ENCODE measurements at regions of chr1 and their contacts with region 1.

Region 1: DNA sequence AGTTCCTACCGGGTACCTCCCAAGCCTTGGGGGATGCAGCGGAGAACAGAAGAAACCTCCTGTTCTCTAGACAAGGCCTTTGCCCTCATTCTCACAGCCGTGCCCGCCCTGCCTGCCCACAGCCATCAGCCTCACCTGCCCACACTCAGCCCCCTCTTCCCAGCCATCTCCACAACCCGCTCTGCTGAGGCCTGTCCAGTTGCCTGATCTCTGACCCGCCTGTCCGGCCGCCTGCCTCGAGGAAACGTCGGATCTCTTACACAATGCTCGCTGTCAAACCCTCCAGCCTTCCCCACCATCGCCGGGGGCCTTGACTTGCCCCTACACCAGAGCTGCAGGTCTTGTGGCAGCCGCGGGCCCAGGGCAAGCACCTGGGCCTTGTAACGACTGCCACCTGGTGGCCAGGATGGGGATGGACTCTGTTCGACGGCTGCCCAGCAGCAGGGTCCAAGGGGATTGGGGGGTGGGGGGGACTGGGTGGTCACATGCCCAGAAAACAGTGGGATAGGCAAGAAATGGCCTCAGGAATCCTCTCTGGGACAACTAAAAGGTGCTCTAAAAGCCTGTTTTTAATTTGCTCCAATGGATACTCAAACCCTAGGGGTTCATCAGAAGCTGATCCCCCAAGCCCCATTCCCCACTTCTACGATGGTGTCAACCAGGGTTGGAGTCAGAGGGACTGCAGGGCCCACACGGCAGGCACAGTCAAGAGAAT is 31.0 kb downstream of the SLC45A1 start:
- DNase-seq: peak; percentile 48
- ATAC-seq: peak; percentile 60
- H3K4me3 ChIP-seq: peak overlapping the region in 1 of 3 experiments; percentile 50; a peak in 1 of 6 replicates
- H3K27ac ChIP-seq: no peak overlapping the region
- H3K4me1 ChIP-seq: peaks cover 32% of the 10 kb centered on the region
- H3K27me3 ChIP-seq: peaks cover 0 to 20% of the 10 kb centered on the region in 2 experiments; a peak in 4 of 5 replicates
- CTCF ChIP-seq: peak; percentile 92
- EP300 ChIP-seq: no peak
- POLR2A ChIP-seq: no peak
- RAD21 ChIP-seq: peak; percentile 87

Region 2: GRCh38 chr1:7983086-7983778 is 365.7 kb before region 1 on chr1:
- CTCF ChIA-PET with region 1: interaction called, 18 read pairs
- POLR2A ChIA-PET with region 1: no interaction called
- in situ Hi-C with region 1: loop called (anchors 5 kb)
- intact Hi-C with region 1: loop called (anchors 1 kb)
- DNase-seq: no peak
- ATAC-seq: no peak
- H3K4me3 ChIP-seq: no peak overlapping the region
- H3K27ac ChIP-seq: no peak overlapping the region
- H3K4me1 ChIP-seq: 0 out of 2 replicates have a peak, but pooled peaks cover 5% of the 10 kb centered on the region
- H3K27me3 ChIP-seq: no peaks in the 10 kb centered on the region; a peak in 1 of 5 replicates
- CTCF ChIP-seq: no peak
- EP300 ChIP-seq: no peak
- POLR2A ChIP-seq: no peak
- RAD21 ChIP-seq: no peak

Measured in HepG2 (cell line).